RWPE1 (cell line): ENCODE measurements at regions of chr10 and their contacts with region 1.

Region 1: DNA sequence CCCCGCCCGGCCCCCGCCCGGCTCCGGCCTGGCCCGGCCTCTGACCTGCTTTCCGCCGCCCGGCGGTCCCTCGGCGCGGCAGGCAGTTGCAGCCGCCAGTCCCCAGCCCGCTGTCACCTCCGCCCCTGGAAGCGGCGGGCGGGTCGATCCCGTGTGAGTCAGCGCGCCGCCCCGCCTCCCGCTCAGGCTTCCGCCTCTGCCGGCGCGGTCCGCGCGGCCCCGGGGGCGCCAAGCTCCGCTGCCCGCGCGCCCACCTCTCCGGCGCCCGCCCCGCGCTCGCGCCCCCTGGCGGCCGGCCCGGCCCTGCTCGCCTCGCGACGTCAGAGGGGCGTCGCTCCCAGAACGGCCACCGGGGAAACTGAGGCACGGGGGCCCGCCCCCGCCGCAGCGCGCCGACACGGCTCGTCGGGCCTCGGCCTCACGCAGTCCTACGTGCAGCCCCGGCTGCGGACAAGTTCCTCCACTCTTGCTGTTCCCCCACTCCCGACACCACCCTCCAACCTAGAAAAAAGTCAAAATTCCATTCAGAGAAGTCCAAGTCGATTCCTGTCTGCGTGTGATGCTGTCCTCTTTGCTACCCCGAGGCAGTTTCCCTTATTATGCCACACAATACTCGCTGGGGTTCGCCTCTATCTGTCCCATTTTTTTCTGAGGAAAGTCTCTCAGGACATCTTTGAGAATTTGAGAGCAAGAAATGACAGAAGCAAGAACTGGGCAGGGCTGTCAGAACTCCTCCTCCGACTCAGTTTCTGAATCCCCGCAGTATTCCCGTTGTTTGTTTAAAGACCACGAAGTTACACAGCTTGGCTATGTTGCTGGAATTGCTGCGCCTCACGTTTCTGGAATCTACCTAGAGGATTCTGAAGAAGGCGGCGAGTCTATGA is at the start of gene DNMBP:
- DNase-seq: peak; percentile 95
- H3K27ac ChIP-seq: peak within 1 kb of the TSS; percentile 89
- CTCF ChIP-seq: peak; percentile 88

Region 2: DNA sequence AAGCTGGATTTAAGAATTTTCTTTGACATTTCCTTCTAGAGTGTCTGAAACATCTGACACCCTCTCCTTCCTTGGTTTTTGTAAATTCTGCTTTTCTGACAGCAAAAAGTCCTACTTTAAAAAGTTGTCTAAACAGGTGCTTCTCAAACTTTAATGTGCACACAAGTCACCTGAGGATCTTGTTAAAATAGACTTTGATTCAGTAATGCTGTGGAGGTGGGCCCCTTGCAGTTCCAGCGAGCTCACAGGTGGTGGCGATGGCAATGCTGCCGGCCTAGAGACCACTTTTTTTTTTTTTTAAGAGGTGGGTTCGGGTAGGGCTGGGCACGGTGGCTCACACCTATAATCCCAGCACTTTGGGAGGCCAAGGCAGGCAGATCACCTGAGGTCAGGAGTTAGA is 150.4 kb before region 1 on chr10:
- CTCF ChIA-PET with region 1: no interaction called
- POLR2A ChIA-PET with region 1: no interaction called
- DNase-seq: no peak
- H3K27ac ChIP-seq: no peak overlapping the region
- CTCF ChIP-seq: peak; percentile 23; the same call in 1 of the 2 replicates

Region 3: GRCh38 chr10:99906470-99906869 is 103.6 kb before region 1 on chr10:
- CTCF ChIA-PET with region 1: interaction called, 14 read pairs
- POLR2A ChIA-PET with region 1: interaction called, 4 read pairs
- DNase-seq: peak; percentile 97
- H3K27ac ChIP-seq: peak overlapping the region; percentile 79
- CTCF ChIP-seq: peak; percentile 60

Region 4: DNA sequence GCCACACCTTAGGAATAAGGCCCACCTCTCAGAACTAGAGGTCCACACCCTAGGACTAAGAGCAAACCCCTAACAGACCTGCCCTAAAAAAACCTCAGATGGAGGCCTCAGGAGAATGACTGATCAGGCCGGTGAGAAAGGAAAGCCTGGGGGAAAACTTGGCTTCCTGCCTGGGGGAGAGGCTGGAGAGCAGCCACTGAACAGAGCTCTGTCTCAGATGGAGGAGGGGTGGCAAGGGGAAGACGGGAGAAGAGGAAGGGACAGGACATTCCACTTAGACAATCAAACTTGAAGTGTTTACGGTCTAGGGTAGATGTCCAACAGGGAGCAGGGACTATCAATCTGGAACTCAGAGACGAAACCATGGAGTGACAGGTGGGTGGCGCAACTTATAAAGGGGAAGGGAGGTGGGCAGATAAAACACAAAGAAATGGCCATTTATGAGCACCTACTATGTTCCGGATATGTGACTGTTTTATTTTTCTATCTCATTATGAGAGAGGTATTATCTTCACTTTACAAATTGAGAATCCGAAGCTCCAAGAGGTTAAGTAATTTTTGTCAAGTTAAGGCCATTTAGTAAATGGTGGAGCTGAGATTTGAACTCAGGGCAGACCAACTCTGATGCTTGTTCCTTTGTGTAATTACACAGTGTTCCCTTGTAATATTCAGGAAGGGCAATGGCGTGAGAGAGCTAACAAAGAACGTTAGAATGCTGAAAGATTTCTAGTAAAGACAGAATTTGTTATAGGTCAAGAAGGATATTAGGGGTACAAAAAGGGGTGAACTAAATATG is 82.9 kb before region 1 on chr10:
- CTCF ChIA-PET with region 1: interaction called, 10 read pairs
- POLR2A ChIA-PET with region 1: no interaction called
- DNase-seq: peak; percentile 72
- H3K27ac ChIP-seq: peak overlapping the region; percentile 69
- CTCF ChIP-seq: no peak

Region 5: GRCh38 chr10:99993701-99994689 is 16.0 kb before region 1 on chr10:
- CTCF ChIA-PET with region 1: interaction called, 10 read pairs
- POLR2A ChIA-PET with region 1: no interaction called
- DNase-seq: peak; percentile 50
- H3K27ac ChIP-seq: peak overlapping the region; percentile 46
- CTCF ChIP-seq: no peak